CD4-positive, alpha-beta memory T cell (primary cell): ENCODE measurements at regions of chr19 and their contacts with region 1.

Region 1: GRCh38 chr19:35462476-35462953 is 14.5 kb downstream of the FFAR2 start:
- DNase-seq: peak; percentile 84 to 90 (median 87)
- H3K4me3 ChIP-seq: peak overlapping the region in 1 of 2 donors; percentile 17
- H3K4me3 Mint-ChIP-seq: peak overlapping the region; percentile 42 to 91 (median 75)
- H3K27ac ChIP-seq: peak overlapping the region; percentile 62
- H3K27ac Mint-ChIP-seq: peak overlapping the region; percentile 78 to 100 (median 97)
- H3K4me1 ChIP-seq: peaks cover 54% of the 10 kb centered on the region
- H3K4me1 Mint-ChIP-seq: peaks cover 25 to 68% (median 48%) of the 10 kb centered on the region in 4 donors
- H3K27me3 ChIP-seq: no peaks in the 10 kb centered on the region
- H3K27me3 Mint-ChIP-seq: peaks cover 0 to 1% of the 10 kb centered on the region in 2 donors

Region 2: DNA sequence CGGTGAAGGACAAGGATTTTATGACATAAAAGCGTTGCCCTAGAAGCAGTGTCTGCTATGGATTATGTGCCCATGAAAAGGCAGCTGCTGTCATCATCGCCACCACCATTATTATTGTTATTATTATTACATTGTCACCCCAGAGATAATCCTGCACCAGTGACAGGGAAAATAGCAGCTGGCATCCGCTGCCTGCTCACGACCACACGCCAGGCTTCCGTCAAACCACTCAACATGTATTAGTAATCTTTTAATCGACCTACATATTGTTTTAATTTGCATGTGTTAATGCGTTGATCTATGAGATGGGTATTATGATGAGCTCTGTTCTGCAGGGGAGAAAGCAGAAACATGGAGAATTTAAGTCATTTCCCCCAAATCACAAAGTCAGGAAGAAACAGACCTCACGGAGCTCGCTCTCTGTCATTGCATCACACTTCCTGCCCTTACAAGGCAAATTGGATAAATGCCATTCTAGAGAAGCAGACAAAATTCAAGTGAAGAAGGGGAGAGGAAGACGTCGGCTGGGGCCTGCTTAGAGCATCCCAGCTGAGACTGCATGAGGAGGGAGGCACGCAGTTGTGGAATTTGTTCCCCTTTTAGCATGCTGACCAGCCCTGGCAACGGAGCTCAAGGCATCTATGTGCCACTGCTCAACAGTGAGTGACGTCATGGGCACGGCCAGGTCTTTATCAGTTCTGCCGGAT is 104.5 kb before region 1 on chr19 and contains the start of gene FFAR3:
- CTCF ChIA-PET with region 1: interaction called, 97 read pairs
- POLR2A ChIA-PET with region 1: interaction called, 20 read pairs
- intact Hi-C with region 1: no loop called
- DNase-seq: peak in 3 of 5 donors; percentile 10 to 24 (median 22)
- H3K4me3 ChIP-seq: no peak within 1 kb of the TSS
- H3K4me3 Mint-ChIP-seq: peak within 1 kb of the TSS in 7 of 8 donors; percentile 19 to 70 (median 58)
- H3K27ac ChIP-seq: no peak within 1 kb of the TSS
- H3K27ac Mint-ChIP-seq: peak within 1 kb of the TSS in 5 of 7 donors; percentile 2 to 75 (median 36)
- H3K4me1 ChIP-seq: peaks cover 15% of the 10 kb centered on the region
- H3K4me1 Mint-ChIP-seq: peaks cover 5 to 9% (median 9%) of the 10 kb centered on the region in 4 donors
- H3K27me3 ChIP-seq: no peaks in the 10 kb centered on the region
- H3K27me3 Mint-ChIP-seq: peaks cover 3 to 9% of the 10 kb centered on the region in 2 donors
- total RNA-seq, gene FFAR3: not detected

Region 3: GRCh38 chr19:35389192-35389861 is 73.2 kb before region 1 on chr19:
- CTCF ChIA-PET with region 1: no interaction called
- POLR2A ChIA-PET with region 1: no interaction called
- intact Hi-C with region 1: no loop called
- DNase-seq: no peak
- H3K4me3 ChIP-seq: no peak overlapping the region
- H3K4me3 Mint-ChIP-seq: no peak overlapping the region
- H3K27ac ChIP-seq: no peak overlapping the region
- H3K27ac Mint-ChIP-seq: no peak overlapping the region
- H3K4me1 ChIP-seq: no peaks in the 10 kb centered on the region
- H3K4me1 Mint-ChIP-seq: no peaks in the 10 kb centered on the region
- H3K27me3 ChIP-seq: no peaks in the 10 kb centered on the region
- H3K27me3 Mint-ChIP-seq: peaks cover 0 to 2% of the 10 kb centered on the region in 2 donors

Region 4: DNA sequence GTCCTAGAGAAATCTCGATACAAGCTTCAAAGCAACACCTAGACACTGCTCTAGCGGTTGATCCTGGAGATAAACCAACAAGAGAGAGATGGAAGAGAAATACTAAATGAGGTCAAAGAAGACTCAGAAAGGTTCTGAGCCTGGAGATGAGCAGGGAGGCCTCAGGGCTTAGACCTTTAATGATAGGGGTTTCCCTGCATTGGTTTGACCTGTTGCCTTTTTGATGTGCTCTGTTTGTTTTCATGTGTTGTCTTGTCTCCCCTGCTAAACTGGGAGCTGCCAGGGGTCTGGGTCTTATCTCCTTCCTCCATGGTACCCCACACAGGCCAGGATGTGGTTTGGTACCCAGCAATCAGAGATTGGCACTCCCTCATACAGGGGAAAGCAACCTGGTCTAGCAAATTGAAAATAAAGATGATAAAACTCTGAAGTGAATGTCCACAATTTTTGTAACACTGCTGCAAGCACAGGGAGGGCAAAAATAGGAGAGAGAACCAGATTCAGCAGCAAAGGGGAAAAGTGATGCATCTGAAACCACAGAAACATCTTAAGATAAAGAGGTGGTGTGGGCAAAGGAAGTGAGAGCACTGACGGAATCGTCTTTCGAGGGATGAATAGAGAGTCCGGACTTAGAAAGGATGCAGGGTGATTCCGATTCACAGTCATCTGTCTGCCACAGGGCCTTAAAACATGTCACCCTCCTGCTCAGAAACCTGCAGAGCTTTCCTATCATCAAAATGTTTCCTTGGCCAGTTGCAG is 11.0 kb before region 1 on chr19:
- CTCF ChIA-PET with region 1: interaction called, 8 read pairs
- POLR2A ChIA-PET with region 1: interaction called, 16 read pairs
- intact Hi-C with region 1: no loop called
- DNase-seq: peak; percentile 37 to 49 (median 40)
- H3K4me3 ChIP-seq: peak overlapping the region in 1 of 2 donors; percentile 17
- H3K4me3 Mint-ChIP-seq: peak overlapping the region in 7 of 8 donors; percentile 19 to 75 (median 70)
- H3K27ac ChIP-seq: peak overlapping the region; percentile 15
- H3K27ac Mint-ChIP-seq: peak overlapping the region; percentile 53 to 89 (median 64)
- H3K4me1 ChIP-seq: peaks cover 39% of the 10 kb centered on the region
- H3K4me1 Mint-ChIP-seq: peaks cover 22 to 71% (median 49%) of the 10 kb centered on the region in 4 donors
- H3K27me3 ChIP-seq: no peaks in the 10 kb centered on the region
- H3K27me3 Mint-ChIP-seq: peaks cover 0 to 2% of the 10 kb centered on the region in 2 donors

Region 5: DNA sequence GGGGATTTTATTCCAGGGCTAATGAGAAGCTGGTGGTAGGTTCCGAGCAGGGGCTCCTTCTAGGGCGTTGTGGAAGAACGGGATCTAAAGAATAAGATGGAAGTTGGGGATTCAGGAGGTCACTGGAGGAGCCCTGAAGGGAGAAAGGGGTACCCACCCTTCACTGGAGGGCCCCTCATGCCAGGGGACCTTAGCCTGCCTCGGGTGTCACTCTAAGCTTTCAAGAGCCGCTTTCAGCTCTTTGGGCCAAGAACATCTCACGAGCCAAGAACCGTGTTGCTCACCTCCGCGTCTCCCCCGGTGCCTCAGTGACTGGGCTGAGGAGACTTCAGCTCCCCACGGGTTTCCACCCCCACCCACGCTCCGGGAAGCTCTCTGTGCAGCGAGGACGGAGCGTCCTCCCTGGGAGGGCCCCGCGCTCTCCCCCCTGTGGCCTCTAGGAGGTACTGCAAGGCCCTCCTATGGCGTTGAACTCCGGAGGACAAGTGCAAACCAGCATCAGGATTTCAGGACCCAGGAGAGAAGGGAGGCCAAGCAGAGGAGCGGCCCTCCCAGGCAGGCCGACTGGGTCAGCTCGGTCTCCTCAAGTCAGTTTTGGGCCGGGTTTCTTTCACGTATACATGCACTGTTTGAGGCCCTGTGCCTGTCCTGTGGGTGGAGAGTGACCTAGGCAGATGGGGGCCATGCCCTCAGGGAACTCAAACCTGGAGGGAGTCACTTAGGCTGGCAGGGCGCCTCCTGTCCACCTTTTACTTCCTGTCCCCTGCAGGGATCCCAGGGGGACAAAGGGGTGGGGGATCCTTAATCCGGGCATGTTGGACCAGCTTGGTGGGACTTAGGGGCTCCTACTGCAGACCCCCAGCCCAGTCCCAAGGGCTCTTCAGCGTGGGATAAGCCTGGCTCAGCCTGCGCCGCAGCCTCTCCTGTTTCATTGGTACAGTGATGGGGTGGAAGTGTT is 32.9 kb after region 1 on chr19:
- CTCF ChIA-PET with region 1: interaction called, 12 read pairs
- POLR2A ChIA-PET with region 1: interaction called, 7 read pairs
- intact Hi-C with region 1: no loop called
- DNase-seq: peak; percentile 59 to 70 (median 63)
- H3K4me3 ChIP-seq: no peak overlapping the region
- H3K4me3 Mint-ChIP-seq: peak overlapping the region in 3 of 8 donors; percentile 38 to 51 (median 39)
- H3K27ac ChIP-seq: no peak overlapping the region
- H3K27ac Mint-ChIP-seq: peak overlapping the region in 3 of 7 donors; percentile 30 to 48 (median 36)
- H3K4me1 ChIP-seq: peaks cover 7% of the 10 kb centered on the region
- H3K4me1 Mint-ChIP-seq: peaks cover 0 to 9% (median 6%) of the 10 kb centered on the region in 4 donors
- H3K27me3 ChIP-seq: no peaks in the 10 kb centered on the region
- H3K27me3 Mint-ChIP-seq: peaks cover 9 to 15% of the 10 kb centered on the region in 2 donors